CD8-positive, alpha-beta T cell (primary cell): ENCODE measurements at regions of chr6 and their contacts with region 1.

Region 1: GRCh38 chr6:114159727-114160126 is 183.1 kb downstream of the HS3ST5 start:
- DNase-seq: no peak
- ATAC-seq: no peak
- H3K4me3 ChIP-seq: no peak overlapping the region
- H3K4me3 Mint-ChIP-seq: no peak overlapping the region
- H3K27ac ChIP-seq: no peak overlapping the region
- H3K27ac Mint-ChIP-seq: no peak overlapping the region
- H3K4me1 ChIP-seq: no peaks in the 10 kb centered on the region
- H3K4me1 Mint-ChIP-seq: no peaks in the 10 kb centered on the region
- H3K27me3 ChIP-seq: no peaks in the 10 kb centered on the region
- H3K27me3 Mint-ChIP-seq: no peaks in the 10 kb centered on the region
- CTCF ChIP-seq: no peak

Region 2: DNA sequence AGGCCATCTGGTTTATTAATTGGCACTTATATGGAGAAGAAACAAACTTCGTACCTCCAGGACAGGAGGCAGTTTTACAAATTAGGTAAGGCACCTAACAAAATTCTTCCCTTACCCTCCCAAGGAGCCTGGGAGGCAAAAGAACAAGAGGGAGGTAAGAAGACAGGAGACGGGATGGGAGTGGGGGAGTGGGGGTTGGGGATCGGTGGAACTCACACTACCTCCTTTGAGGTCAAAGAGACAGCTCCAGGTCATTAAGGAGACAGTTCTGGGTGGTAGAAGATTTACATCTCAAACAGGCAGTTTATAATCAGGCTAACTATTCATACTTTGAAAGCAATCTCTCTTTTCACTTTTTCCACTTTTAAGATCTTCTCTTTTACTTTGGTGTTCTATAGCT is 76.5 kb before region 1 on chr6:
- CTCF ChIA-PET with region 1: no interaction called
- POLR2A ChIA-PET with region 1: no interaction called
- intact Hi-C with region 1: loop called in 1 of 2 experiments (anchors 2 kb)
- DNase-seq: no peak
- ATAC-seq: no peak
- H3K4me3 ChIP-seq: no peak overlapping the region
- H3K4me3 Mint-ChIP-seq: no peak overlapping the region
- H3K27ac ChIP-seq: no peak overlapping the region
- H3K27ac Mint-ChIP-seq: no peak overlapping the region
- H3K4me1 ChIP-seq: no peaks in the 10 kb centered on the region
- H3K4me1 Mint-ChIP-seq: no peaks in the 10 kb centered on the region
- H3K27me3 ChIP-seq: no peaks in the 10 kb centered on the region
- H3K27me3 Mint-ChIP-seq: peaks cover 11% of the 10 kb centered on the region
- CTCF ChIP-seq: no peak

Region 3: GRCh38 chr6:114169763-114170162 is 10.0 kb after region 1 on chr6:
- CTCF ChIA-PET with region 1: no interaction called
- POLR2A ChIA-PET with region 1: no interaction called
- intact Hi-C with region 1: no loop called
- DNase-seq: no peak
- ATAC-seq: no peak
- H3K4me3 ChIP-seq: no peak overlapping the region
- H3K4me3 Mint-ChIP-seq: no peak overlapping the region
- H3K27ac ChIP-seq: no peak overlapping the region
- H3K27ac Mint-ChIP-seq: no peak overlapping the region
- H3K4me1 ChIP-seq: no peaks in the 10 kb centered on the region
- H3K4me1 Mint-ChIP-seq: no peaks in the 10 kb centered on the region
- H3K27me3 ChIP-seq: no peaks in the 10 kb centered on the region
- H3K27me3 Mint-ChIP-seq: peaks cover 6% of the 10 kb centered on the region
- CTCF ChIP-seq: no peak